Activated naive CD4-positive, alpha-beta T cell treated with anti-CD3 and anti-CD28 coated beads for 36 hours (primary cell): ENCODE measurements at regions of chr13 and their contacts with region 1.

Region 1: DNA sequence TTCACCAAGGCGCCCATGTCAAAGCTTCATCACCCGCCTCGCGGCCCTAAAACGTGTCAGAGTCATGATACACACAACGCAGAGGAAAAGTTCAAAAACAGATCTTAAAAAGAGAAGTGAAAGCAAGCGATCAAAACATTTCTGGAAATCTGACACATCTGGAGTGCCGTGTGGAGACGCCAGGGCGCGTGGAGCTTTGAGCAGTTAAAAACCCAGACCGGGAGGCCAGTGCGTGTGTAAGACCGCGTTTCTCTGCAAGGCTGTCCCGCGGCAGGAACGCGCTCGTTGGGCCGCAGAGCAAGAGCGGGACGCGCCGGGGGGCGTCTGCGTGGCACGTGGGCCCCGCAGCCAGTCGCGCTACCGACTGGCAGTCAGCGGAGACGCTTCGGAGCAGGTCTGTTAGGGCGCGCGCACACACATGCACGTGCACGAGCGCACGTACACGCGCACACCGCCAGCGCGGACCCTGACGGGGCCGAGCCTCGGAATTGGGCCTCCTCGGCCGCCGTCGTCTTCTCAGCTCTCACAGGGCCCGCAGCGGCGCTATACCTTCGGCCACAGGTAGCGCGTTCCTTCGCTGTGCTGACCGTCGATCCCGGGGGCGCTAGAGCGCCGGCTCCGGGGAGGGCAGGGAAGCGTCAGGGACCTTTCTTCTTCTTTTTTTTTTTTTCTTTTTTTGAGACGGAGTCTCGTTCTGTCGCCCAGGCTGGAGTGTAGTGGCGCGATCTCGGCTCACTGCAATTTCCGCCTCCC is 35.8 kb downstream of the RNF6 start:
- DNase-seq: peak; percentile 88
- H3K4me3 Mint-ChIP-seq: peak overlapping the region; percentile 88
- H3K27ac Mint-ChIP-seq: peak overlapping the region; percentile 95
- H3K4me1 Mint-ChIP-seq: peaks cover 21% of the 10 kb centered on the region
- H3K27me3 Mint-ChIP-seq: no peaks in the 10 kb centered on the region

Region 2: DNA sequence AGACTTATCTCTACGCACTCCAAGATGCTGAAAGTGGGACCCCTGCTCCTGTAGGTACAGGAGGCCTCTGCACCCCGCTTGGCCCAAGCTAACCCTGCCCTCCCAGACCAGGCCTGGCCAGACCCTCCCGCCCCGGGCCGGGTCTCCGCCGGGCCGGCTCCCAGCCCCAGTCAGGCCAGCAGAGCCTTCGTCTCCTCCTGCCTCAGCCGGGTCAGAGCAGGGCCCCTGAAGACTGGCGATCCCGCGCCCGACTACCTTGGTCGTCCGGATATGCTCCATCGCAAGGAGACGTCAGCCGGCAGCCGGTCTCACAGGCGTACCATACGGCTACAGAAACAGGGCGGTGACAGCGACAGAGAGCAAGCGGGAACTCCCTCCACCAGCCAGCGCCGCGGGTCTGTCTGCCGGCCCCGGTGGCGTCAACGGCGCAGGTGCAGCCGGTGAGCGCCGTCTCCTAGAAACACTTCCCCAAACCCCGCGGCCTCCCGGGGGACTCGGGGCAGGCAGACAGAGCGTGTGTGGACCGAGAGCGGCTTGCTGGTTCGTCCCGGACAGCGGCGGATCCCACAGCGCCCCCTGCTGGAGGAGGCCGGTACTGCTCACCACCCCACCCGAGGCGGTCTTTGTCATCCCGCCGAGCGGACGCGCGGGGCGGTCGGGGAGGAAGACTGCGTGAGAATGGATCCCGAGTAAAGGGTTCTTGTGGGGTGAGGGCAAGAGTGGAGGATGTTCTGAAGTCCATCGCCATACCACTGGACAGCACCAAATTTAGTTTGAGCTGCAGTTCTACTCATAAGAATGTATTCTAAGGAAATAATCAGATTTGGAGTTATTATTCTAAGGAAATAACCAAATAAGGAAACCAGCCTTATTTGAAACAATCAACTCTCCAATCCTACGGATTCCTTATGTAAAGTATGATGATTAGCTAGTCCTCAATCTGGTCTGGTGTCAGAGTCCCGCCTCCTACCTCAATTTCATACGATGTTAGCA is 899.0 kb before region 1 on chr13 and contains the start of gene MTMR6:
- CTCF ChIA-PET with region 1: no interaction called
- intact Hi-C with region 1: loop called (anchors 10 kb)
- DNase-seq: peak; percentile 95
- H3K4me3 Mint-ChIP-seq: peak within 1 kb of the TSS; percentile 93
- H3K27ac Mint-ChIP-seq: peak within 1 kb of the TSS; percentile 92
- H3K4me1 Mint-ChIP-seq: peaks cover 40% of the 10 kb centered on the region
- H3K27me3 Mint-ChIP-seq: peaks cover 3% of the 10 kb centered on the region
- total RNA-seq, gene MTMR6: 5.5 to 5.7 TPM

Region 3: GRCh38 chr13:26221721-26222519 is 35.6 kb after region 1 on chr13 and contains the start of gene RNF6:
- CTCF ChIA-PET with region 1: interaction called, 33 read pairs
- intact Hi-C with region 1: loop called (anchors 1 kb)
- DNase-seq: peak; percentile 92
- H3K4me3 Mint-ChIP-seq: peak within 1 kb of the TSS; percentile 91
- H3K27ac Mint-ChIP-seq: peak within 1 kb of the TSS; percentile 100
- H3K4me1 Mint-ChIP-seq: peaks cover 30% of the 10 kb centered on the region
- H3K27me3 Mint-ChIP-seq: peaks cover 2% of the 10 kb centered on the region
- total RNA-seq, gene RNF6: 38.2 to 39.4 TPM

Region 4: GRCh38 chr13:26494571-26495195 is 308.4 kb after region 1 on chr13:
- CTCF ChIA-PET with region 1: interaction called, 81 read pairs
- intact Hi-C with region 1: loop called (anchors 1 kb)
- DNase-seq: no peak
- H3K4me3 Mint-ChIP-seq: no peak overlapping the region
- H3K27ac Mint-ChIP-seq: no peak overlapping the region
- H3K4me1 Mint-ChIP-seq: no peaks in the 10 kb centered on the region
- H3K27me3 Mint-ChIP-seq: no peaks in the 10 kb centered on the region

Region 5: GRCh38 chr13:26628706-26629105 is 442.4 kb after region 1 on chr13:
- CTCF ChIA-PET with region 1: interaction called, 7 read pairs
- intact Hi-C with region 1: loop called (anchors 1 kb)
- DNase-seq: peak; percentile 28
- H3K4me3 Mint-ChIP-seq: no peak overlapping the region
- H3K27ac Mint-ChIP-seq: no peak overlapping the region
- H3K4me1 Mint-ChIP-seq: no peaks in the 10 kb centered on the region
- H3K27me3 Mint-ChIP-seq: no peaks in the 10 kb centered on the region

Region 6: DNA sequence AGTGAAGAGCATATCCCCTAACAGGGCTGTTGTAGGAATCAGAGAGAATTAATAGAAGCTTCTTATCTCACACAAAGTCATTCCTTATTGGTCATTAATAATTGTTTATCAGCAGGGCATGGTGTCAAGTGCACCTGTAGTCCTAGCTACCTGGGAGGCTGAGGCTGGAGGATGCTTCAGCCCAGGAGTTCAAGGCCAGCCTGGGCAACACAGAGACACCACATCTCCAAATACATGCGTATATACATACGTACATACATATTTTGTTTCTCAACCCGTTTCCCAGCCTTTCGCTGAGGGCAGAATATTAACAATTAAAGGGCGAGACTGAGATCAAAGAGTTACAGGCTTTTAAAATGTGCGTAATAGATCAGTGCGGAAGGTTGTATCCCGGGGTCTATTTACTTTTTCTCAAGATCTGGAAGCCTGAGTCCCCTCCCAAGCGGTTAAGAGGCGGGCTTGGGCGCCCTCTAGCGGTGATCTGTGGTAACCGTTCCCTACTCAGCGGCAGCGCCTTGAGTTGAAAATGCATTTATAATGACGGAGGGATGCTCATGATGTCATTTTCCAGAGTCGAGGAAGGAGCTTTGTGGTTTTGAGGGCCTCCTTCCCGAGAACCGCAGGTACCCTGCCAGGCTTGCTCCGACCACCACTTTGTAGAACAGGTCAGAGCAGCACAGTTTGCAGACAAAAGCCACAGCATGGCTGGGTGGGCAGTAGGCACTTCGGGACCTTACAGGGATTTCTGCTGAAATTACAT is 743.9 kb after region 1 on chr13:
- CTCF ChIA-PET with region 1: interaction called, 3 read pairs
- intact Hi-C with region 1: loop called (anchors 1 kb)
- DNase-seq: peak; percentile 79
- H3K4me3 Mint-ChIP-seq: no peak overlapping the region
- H3K27ac Mint-ChIP-seq: no peak overlapping the region
- H3K4me1 Mint-ChIP-seq: no peaks in the 10 kb centered on the region
- H3K27me3 Mint-ChIP-seq: peaks cover 3% of the 10 kb centered on the region